ENCODE measurements at regions of chr15 and their contacts with region 1.

Region 1: GRCh38 chr15:52730173-52730572 is 51.0 kb upstream of the ATOSA start:
- DNase-seq: no peak
- ATAC-seq: no peak
- H3K4me3 ChIP-seq: no peak overlapping the region
- H3K27ac ChIP-seq: no peak overlapping the region
- H3K4me1 ChIP-seq: peaks cover 0 to 51% (median 19%) of the 10 kb centered on the region in 9 donors
- H3K27me3 ChIP-seq: no peaks in the 10 kb centered on the region
- CTCF ChIP-seq: no peak

Region 2: DNA sequence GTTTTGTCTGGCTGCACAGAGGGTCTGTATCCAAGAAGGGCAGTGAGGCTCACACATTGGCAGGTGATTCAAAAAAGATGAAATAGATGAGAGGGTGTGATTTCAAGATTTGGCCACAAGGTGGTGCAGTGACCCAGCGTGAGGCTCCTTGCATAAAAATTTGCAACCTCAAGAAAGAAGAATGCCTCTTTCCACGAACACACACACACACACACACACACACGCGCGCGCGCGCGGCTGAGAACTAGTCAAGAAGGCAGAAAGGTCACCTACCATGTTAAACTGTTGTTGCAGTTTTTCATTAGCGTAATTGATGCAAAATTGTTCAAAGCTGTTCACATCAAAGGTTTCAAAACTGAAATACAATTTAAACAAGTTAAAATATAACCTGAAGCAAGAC is 473.8 kb before region 1 on chr15:
- intact Hi-C with region 1: loop called (anchors 1 to 5 kb)
- DNase-seq: peak; percentile 37 to 72
- ATAC-seq: peak; percentile 32 to 79 (median 52)
- H3K4me3 ChIP-seq: peak overlapping the region in 3 of 10 donors; percentile 9 to 15 (median 9)
- H3K27ac ChIP-seq: no peak overlapping the region
- H3K4me1 ChIP-seq: peaks cover 0 to 51% (median 18%) of the 10 kb centered on the region in 9 donors
- H3K27me3 ChIP-seq: no peaks in the 10 kb centered on the region
- CTCF ChIP-seq: peak; percentile 73 to 82 (median 78)

Region 3: DNA sequence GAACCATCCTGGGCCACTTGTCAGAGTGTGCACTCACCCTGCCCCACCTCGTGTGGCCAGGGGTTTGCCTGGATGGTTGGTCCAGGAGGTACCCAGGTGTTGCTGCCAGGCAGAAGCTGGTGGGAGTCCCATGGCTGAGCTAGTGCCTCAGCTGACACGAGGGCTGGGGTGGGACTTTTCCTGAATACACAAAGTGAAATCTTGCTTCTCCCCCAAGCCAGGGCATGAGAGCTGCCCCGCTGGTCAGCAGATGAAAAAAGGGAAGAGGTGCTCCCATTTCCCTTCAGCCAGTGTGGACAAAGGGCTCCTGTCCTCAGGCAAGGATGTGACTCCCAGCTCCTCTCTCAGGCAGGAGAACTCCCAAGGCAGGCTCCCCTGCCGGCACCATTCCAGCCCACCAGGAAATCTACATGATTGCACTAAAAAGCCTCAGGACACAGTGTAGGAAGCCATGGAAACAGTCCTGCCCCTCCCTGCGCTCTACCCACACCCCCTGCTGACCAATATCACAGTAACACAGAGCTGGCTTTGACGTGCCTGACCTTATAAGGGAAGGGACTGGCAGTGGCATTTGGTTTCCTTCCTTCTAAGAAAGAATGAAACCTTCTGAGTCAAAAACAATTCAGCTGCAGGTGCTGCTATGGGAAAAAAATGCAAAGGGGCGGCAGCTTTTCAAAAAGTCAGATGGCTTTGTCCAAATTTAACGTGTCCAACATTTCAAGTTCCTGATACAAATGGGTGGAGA is 468.5 kb before region 1 on chr15:
- intact Hi-C with region 1: loop called (anchors 1 to 5 kb)
- DNase-seq: peak; percentile 40 to 79
- ATAC-seq: peak; percentile 84 to 96 (median 94)
- H3K4me3 ChIP-seq: no peak overlapping the region
- H3K27ac ChIP-seq: peak overlapping the region in 9 of 10 donors; percentile 37 to 79 (median 59)
- H3K4me1 ChIP-seq: peaks cover 0 to 35% (median 30%) of the 10 kb centered on the region in 9 donors
- H3K27me3 ChIP-seq: no peaks in the 10 kb centered on the region
- CTCF ChIP-seq: peak in 4 of 9 donors; percentile 24 to 32 (median 28)

Region 4: GRCh38 chr15:52337198-52337853 is 392.8 kb before region 1 on chr15:
- intact Hi-C with region 1: loop called in 6 of 10 experiments (anchors 5 to 10 kb)
- DNase-seq: no peak
- ATAC-seq: peak in 6 of 8 donors; percentile 22 to 71 (median 58)
- H3K4me3 ChIP-seq: no peak overlapping the region
- H3K27ac ChIP-seq: peak overlapping the region in 8 of 10 donors; percentile 7 to 59 (median 43)
- H3K4me1 ChIP-seq: peaks cover 0 to 15% (median 4%) of the 10 kb centered on the region in 9 donors
- H3K27me3 ChIP-seq: no peaks in the 10 kb centered on the region
- CTCF ChIP-seq: no peak

Region 5: GRCh38 chr15:52679232-52680040 is 50.7 kb before region 1 on chr15 and contains the start of gene ATOSA:
- intact Hi-C with region 1: loop called in 4 of 10 experiments (anchors 5 to 10 kb)
- DNase-seq: peak; percentile 90 to 94
- ATAC-seq: peak; percentile 93 to 97 (median 95)
- H3K4me3 ChIP-seq: peak within 1 kb of the TSS; percentile 74 to 95 (median 89)
- H3K27ac ChIP-seq: peak within 1 kb of the TSS; percentile 95 to 99 (median 97)
- H3K4me1 ChIP-seq: peaks cover 0 to 50% (median 44%) of the 10 kb centered on the region in 9 donors
- H3K27me3 ChIP-seq: no peaks in the 10 kb centered on the region
- CTCF ChIP-seq: peak in 4 of 9 donors; percentile 4 to 21 (median 12)
- total RNA-seq, gene ATOSA: 18.9 to 36.4 (median 30.3) TPM

Region 6: DNA sequence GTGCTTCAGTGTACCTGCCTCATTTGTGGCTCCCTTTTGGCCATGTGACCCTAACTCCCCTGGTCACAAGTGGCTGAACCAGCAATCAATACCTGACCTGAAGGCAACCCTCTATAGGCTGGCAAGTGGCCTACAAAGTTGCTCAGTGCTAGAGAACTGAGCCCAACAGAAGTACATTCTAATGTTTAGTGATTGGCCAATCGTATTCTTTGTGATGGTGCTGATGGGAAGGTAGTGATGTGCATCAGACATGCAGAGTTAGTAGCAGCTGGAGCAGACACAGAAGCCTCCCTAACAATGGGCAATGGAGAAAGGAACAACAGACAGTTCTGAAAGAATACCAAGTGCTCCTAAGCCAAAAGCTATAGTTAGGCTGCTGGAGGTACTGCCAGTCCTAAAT is 40.6 kb before region 1 on chr15:
- intact Hi-C with region 1: loop called in 4 of 10 experiments (anchors 5 to 10 kb)
- DNase-seq: no peak
- ATAC-seq: no peak
- H3K4me3 ChIP-seq: no peak overlapping the region
- H3K27ac ChIP-seq: no peak overlapping the region
- H3K4me1 ChIP-seq: no peaks in the 10 kb centered on the region
- H3K27me3 ChIP-seq: peaks cover 0 to 4% (median 0%) of the 10 kb centered on the region in 7 donors
- CTCF ChIP-seq: no peak

Region 7: GRCh38 chr15:52879904-52880303 is 149.7 kb after region 1 on chr15:
- intact Hi-C with region 1: no loop called
- DNase-seq: no peak
- ATAC-seq: no peak
- H3K4me3 ChIP-seq: no peak overlapping the region
- H3K27ac ChIP-seq: no peak overlapping the region
- H3K4me1 ChIP-seq: no peaks in the 10 kb centered on the region
- H3K27me3 ChIP-seq: peaks cover 0 to 11% (median 0%) of the 10 kb centered on the region in 7 donors
- CTCF ChIP-seq: no peak

Measured in heart right ventricle (tissue), 16 donors.